K562 (cell line): ENCODE measurements at regions of chr6 and their contacts with region 1.

Region 1: DNA sequence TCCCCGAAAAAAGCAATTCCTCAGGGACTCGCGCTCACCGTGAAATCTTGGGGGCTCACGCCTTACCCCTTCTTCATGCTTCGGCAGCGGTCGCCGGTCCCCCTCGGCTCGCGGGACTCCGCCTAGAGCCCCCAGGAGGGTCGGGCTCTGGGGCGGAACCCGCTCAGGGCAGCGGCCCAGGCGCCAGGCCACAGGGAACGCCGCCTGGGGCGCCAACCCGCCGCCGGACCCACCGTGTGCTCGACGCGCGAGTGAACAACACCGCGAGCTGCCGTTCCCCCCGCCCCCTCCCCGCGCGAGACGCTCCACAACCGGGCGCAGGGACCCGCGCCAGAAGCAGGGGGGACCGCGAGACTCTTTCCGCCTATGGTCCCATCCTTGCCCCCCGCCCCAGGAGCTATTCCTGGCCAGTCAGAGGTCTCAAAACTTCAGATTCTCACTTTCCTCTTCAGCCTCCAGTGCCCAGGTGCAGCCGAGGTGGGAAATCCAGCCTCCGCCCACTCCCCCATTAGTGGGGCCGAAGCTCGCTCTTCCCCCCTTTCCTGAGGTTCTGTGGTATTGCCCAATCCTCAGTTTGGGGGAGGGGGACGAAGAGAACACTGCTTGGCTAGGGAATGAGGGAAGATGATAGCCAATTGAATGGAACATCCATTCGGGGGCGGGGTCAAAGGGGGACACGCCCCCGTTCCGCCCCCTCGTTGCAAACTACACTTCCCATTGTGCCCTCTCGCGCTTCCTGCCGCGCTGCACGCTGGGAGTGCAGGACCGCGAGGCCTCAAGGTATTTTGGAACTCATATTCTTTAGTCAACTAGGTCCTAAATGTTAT is at the start of gene WASF1:
- DNase-seq: peak; percentile 87 to 98 (median 91)
- ATAC-seq: peak; percentile 90
- H3K4me3 ChIP-seq: peak within 1 kb of the TSS; percentile 88
- H3K27ac ChIP-seq: peak within 1 kb of the TSS; percentile 94
- H3K4me1 ChIP-seq: peaks cover 12 to 13% of the 10 kb centered on the region in 2 experiments; a peak in 4 of 5 replicates
- H3K27me3 ChIP-seq: no peaks in the 10 kb centered on the region
- CTCF ChIP-seq: 0 out of 6 replicates have a peak, but pooled peaks of 1 of the 3 experiments have one; percentile 10
- EP300 ChIP-seq: no peak
- POLR2A ChIP-seq: peak; percentile 68
- RAD21 ChIP-seq: no peak
- polyA plus RNA-seq, gene WASF1: 2.1 to 3.4 TPM

Region 2: GRCh38 chr6:110002676-110003075 is 176.9 kb before region 1 on chr6:
- CTCF ChIA-PET with region 1: no interaction called
- POLR2A ChIA-PET with region 1: no interaction called
- in situ Hi-C with region 1: no loop called
- intact Hi-C with region 1: no loop called
- DNase-seq: no peak
- ATAC-seq: no peak
- H3K4me3 ChIP-seq: no peak overlapping the region
- H3K27ac ChIP-seq: no peak overlapping the region
- H3K4me1 ChIP-seq: no peaks in the 10 kb centered on the region
- H3K27me3 ChIP-seq: no peaks in the 10 kb centered on the region
- CTCF ChIP-seq: no peak
- EP300 ChIP-seq: no peak
- POLR2A ChIP-seq: no peak
- RAD21 ChIP-seq: no peak

Region 3: GRCh38 chr6:110125361-110125760 is 54.3 kb before region 1 on chr6:
- CTCF ChIA-PET with region 1: no interaction called
- POLR2A ChIA-PET with region 1: no interaction called
- in situ Hi-C with region 1: no loop called
- intact Hi-C with region 1: no loop called
- DNase-seq: no peak
- ATAC-seq: no peak
- H3K4me3 ChIP-seq: no peak overlapping the region
- H3K27ac ChIP-seq: no peak overlapping the region
- H3K4me1 ChIP-seq: no peaks in the 10 kb centered on the region
- H3K27me3 ChIP-seq: no peaks in the 10 kb centered on the region
- CTCF ChIP-seq: no peak
- EP300 ChIP-seq: no peak
- POLR2A ChIP-seq: no peak
- RAD21 ChIP-seq: no peak

Region 4: GRCh38 chr6:110389689-110390382 is 210.2 kb after region 1 on chr6:
- CTCF ChIA-PET with region 1: interaction called, 8 read pairs
- POLR2A ChIA-PET with region 1: no interaction called
- in situ Hi-C with region 1: loop called (anchors 10 kb)
- intact Hi-C with region 1: loop called (anchors 1 kb)
- DNase-seq: peak in 1 of 4 experiments; percentile 23
- ATAC-seq: peak; percentile 42; the same call in 1 of the 3 replicates
- H3K4me3 ChIP-seq: no peak overlapping the region
- H3K27ac ChIP-seq: no peak overlapping the region
- H3K4me1 ChIP-seq: peaks cover 0 to 3% of the 10 kb centered on the region in 2 experiments; a peak in 2 of 5 replicates
- H3K27me3 ChIP-seq: peaks cover 0 to 12% of the 10 kb centered on the region in 2 experiments; a peak in 2 of 5 replicates
- CTCF ChIP-seq: no peak
- EP300 ChIP-seq: no peak; the same call in 1 of the 2 replicates
- POLR2A ChIP-seq: no peak
- RAD21 ChIP-seq: no peak

Region 5: DNA sequence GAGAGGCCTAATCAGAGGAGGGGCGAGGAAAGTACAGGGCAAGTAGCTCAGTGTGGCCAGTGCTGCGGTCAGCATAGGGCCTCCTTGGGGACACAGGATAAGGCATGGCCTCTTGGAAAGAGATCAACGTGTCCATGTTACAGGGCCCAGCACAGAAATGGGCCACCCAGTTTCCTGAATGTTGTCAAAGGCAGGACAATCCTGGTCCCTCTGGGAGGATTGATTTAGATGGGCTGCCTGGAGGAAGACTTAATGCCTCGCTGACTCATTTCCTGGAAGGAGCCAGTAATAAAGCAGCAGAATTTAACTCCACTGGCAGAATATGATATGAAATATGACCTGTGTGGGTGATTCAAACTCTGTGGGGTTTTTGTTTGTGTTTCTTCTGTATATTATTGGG is 219.2 kb after region 1 on chr6:
- CTCF ChIA-PET with region 1: interaction called, 3 read pairs
- POLR2A ChIA-PET with region 1: no interaction called
- in situ Hi-C with region 1: loop called (anchors 10 kb)
- intact Hi-C with region 1: no loop called
- DNase-seq: peak in 2 of 4 experiments; percentile 14 to 30
- ATAC-seq: peak; percentile 74
- H3K4me3 ChIP-seq: no peak overlapping the region
- H3K27ac ChIP-seq: no peak overlapping the region
- H3K4me1 ChIP-seq: peaks cover 9 to 11% of the 10 kb centered on the region in 2 experiments; a peak in 3 of 5 replicates
- H3K27me3 ChIP-seq: peaks cover 0 to 14% of the 10 kb centered on the region in 2 experiments; a peak in 3 of 5 replicates
- CTCF ChIP-seq: no peak
- EP300 ChIP-seq: no peak
- POLR2A ChIP-seq: no peak
- RAD21 ChIP-seq: no peak